ENCODE measurements at regions of chr1 and their contacts with region 1.

Region 1: DNA sequence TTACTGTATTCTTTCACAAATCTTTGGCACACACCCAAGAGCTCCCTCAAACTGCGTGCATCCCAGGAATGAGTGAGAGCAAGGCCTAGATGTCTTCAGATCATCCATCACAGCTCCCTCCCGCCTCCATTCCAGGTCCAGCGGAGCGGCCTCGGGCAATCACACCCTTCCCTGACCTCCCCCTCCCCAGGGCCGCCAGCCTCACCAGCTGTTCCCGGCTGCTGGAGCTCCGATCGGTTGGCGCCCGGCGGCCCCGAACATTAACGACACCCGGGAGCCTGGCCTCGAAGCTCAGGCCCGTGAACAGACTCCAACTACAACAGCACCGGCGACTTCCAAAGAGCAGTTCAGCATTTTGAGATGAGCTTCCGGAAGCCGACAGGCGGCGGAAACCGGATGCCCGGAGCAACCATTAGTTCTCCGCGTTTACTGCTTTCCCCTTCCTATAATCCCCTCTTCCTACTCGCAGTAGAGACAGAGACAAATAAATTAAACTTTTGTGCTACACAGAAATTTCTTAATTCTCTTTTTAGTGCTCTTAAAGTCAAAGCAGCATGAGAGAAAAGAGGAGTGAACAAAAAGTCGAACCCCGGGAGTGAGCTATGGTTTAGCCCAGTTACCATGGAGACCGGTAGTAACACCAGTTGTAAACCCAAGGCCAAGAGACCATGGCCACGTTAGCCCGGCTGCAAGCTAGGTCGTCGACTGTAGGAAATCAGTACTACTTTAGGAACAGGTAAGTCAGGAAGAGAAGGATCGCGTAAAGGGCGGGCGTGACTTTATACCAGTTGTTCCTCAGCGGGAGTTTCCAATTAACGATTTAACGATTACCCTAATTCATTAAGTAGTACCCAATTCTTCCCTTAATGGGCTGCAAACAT is at the starts of genes GPATCH2 and SPATA17:
- DNase-seq: peak; percentile 86 to 91 (median 89)
- H3K4me3 ChIP-seq: peak within 1 kb of the TSS; percentile 36 to 83
- H3K4me3 Mint-ChIP-seq: peak within 1 kb of the TSS; percentile 93 to 99 (median 96)
- H3K27ac ChIP-seq: peak within 1 kb of the TSS; percentile 94
- H3K27ac Mint-ChIP-seq: peak within 1 kb of the TSS; percentile 97 to 100 (median 99)
- H3K4me1 ChIP-seq: peaks cover 47% of the 10 kb centered on the region
- H3K4me1 Mint-ChIP-seq: peaks cover 21 to 49% (median 30%) of the 10 kb centered on the region in 4 donors
- H3K27me3 ChIP-seq: no peaks in the 10 kb centered on the region
- H3K27me3 Mint-ChIP-seq: no peaks in the 10 kb centered on the region
- total RNA-seq, gene GPATCH2: 9.7 to 11.3 TPM
- total RNA-seq, gene SPATA17: not detected

Region 2: GRCh38 chr1:217554849-217555248 is 76.1 kb before region 1 on chr1:
- CTCF ChIA-PET with region 1: no interaction called
- POLR2A ChIA-PET with region 1: no interaction called
- intact Hi-C with region 1: no loop called
- DNase-seq: no peak
- H3K4me3 ChIP-seq: no peak overlapping the region
- H3K4me3 Mint-ChIP-seq: no peak overlapping the region
- H3K27ac ChIP-seq: no peak overlapping the region
- H3K27ac Mint-ChIP-seq: no peak overlapping the region
- H3K4me1 ChIP-seq: no peaks in the 10 kb centered on the region
- H3K4me1 Mint-ChIP-seq: peaks cover 0 to 1% (median 0%) of the 10 kb centered on the region in 4 donors
- H3K27me3 ChIP-seq: no peaks in the 10 kb centered on the region
- H3K27me3 Mint-ChIP-seq: no peaks in the 10 kb centered on the region

Region 3: DNA sequence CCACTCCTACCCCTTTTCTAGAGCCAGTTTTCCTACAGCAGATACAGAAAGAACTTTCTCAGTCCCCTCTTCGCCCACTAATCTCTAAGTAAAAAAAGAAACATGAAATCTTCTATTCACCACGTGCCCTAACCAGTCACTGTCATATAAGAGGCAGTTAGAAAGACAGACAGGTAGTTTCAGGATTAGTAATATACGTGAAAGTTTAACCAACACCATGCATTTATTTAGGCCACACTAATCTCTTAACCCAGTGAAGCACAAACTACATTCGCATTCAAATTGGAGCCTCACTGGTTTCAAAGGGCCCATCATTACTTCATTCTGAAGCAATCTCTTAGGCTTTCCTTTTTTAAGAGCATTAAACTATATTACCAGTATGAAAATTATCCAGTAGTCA is 10.1 kb before region 1 on chr1:
- CTCF ChIA-PET with region 1: interaction called, 10 read pairs
- POLR2A ChIA-PET with region 1: interaction called, 14 read pairs
- intact Hi-C with region 1: no loop called
- DNase-seq: no peak
- H3K4me3 ChIP-seq: no peak overlapping the region
- H3K4me3 Mint-ChIP-seq: no peak overlapping the region
- H3K27ac ChIP-seq: no peak overlapping the region
- H3K27ac Mint-ChIP-seq: peak overlapping the region in 4 of 7 donors; percentile 0 to 42 (median 10)
- H3K4me1 ChIP-seq: peaks cover 4% of the 10 kb centered on the region
- H3K4me1 Mint-ChIP-seq: peaks cover 16 to 35% (median 23%) of the 10 kb centered on the region in 4 donors
- H3K27me3 ChIP-seq: no peaks in the 10 kb centered on the region
- H3K27me3 Mint-ChIP-seq: no peaks in the 10 kb centered on the region

Measured in CD4-positive, alpha-beta memory T cell (primary cell).